Mammary epithelial cell (primary cell): ENCODE measurements at regions of chr17 and their contacts with region 1.

Region 1: DNA sequence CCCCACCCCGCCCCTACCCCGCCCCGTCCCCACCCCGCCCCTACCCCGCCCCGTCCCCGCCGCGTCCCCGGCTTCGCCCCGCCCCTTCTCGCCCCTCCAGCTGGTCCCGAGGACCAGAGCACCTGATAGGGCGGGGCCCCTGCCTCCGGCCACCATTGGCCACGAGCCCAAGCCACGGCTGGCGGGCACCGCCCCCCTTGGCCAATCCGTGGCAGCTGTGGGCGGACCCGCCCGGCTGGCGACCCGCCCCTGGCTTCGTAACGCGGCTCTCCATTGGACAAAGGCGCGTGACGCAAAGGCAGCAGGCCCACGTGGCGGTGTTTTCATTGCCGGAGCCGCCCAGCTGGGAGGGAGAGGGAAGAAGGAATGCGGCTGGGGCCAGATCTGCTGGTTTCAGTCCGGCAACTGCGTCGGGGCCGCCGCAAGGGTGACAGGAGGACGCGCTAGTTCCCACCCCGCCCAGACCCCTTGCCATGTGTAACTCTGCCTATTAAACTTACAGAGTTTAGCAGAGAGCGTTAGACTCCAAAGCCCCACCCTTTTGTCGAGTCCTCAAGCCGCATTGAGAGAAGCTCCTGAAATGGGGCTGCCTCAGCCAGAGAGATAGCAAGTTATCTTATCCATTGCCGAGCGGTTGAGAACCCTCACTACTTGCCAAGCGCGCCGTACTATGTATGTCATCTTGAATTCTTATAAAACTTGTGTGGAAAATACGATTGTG is 403 bp upstream of the WIPI1 start:
- DNase-seq: peak; percentile 99
- H3K4me3 ChIP-seq: peak overlapping the region; percentile 47 to 50 (median 48)
- H3K27ac ChIP-seq: peak overlapping the region; percentile 56
- H3K4me1 ChIP-seq: peaks cover 34% of the 10 kb centered on the region
- H3K27me3 ChIP-seq: no peaks in the 10 kb centered on the region
- CTCF ChIP-seq: no peak

Region 2: GRCh38 chr17:67959288-67959900 is 498.3 kb before region 1 on chr17:
- CTCF ChIA-PET with region 1: no interaction called
- dilution Hi-C with region 1: no loop called
- in situ Hi-C with region 1: loop called in 1 of 2 experiments (anchors 25 kb)
- intact Hi-C with region 1: loop called (anchors 2 kb)
- DNase-seq: no peak
- H3K4me3 ChIP-seq: no peak overlapping the region
- H3K27ac ChIP-seq: no peak overlapping the region
- H3K4me1 ChIP-seq: no peaks in the 10 kb centered on the region
- H3K27me3 ChIP-seq: no peaks in the 10 kb centered on the region
- CTCF ChIP-seq: no peak

Region 3: DNA sequence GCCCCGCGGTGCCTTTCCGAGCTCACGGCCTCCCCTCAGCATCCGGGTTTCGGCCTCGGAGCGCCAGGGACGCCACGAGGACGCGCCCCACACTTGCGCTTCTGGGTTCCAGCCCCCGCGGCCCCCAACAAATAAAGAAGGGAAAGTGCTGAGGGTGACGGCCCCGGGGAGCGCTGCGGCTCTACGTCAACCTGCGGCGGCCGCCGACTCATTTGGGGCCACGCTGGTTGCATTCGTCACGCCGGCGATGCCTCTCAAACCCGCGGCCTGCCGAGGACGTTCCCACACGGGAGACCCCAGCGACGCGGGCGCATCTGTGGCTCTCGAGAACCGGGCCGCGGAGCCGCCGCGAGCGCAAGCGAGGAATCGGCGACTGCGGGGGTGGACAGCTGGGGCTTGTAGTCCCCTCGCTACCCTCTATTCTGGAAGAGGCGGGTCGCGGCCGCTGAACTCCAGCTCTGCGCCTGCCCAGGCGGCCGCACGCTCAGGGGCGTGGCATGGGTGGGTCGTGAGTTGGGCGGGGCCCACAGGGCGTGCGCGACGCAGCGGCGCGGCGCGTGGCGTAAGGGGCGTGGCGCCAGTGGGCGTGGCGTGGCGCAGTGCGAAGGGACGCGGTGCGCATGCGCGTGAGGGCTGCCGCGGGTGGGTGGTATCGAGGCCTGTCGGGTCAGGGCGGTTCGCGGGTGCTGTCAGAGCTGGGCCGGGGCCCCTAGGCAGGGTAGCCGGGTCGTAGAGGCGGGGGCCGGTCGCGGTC is 210.1 kb before region 1 on chr17 and contains the start of gene AMZ2:
- CTCF ChIA-PET with region 1: no interaction called
- dilution Hi-C with region 1: loop called (anchors 5 kb)
- in situ Hi-C with region 1: loop called in 1 of 2 experiments (anchors 10 kb)
- intact Hi-C with region 1: loop called (anchors 5 kb)
- DNase-seq: peak; percentile 91
- H3K4me3 ChIP-seq: peak within 1 kb of the TSS; percentile 67 to 93 (median 71)
- H3K27ac ChIP-seq: peak within 1 kb of the TSS; percentile 83
- H3K4me1 ChIP-seq: peaks cover 8% of the 10 kb centered on the region
- H3K27me3 ChIP-seq: no peaks in the 10 kb centered on the region
- CTCF ChIP-seq: no peak
- total RNA-seq, gene AMZ2: 96.4 to 124 TPM

Region 4: GRCh38 chr17:68435876-68436842 is 21.5 kb before region 1 on chr17:
- CTCF ChIA-PET with region 1: interaction called, 6 read pairs
- dilution Hi-C with region 1: no loop called
- in situ Hi-C with region 1: no loop called
- intact Hi-C with region 1: loop called (anchors 1 kb)
- DNase-seq: peak; percentile 62
- H3K4me3 ChIP-seq: no peak overlapping the region
- H3K27ac ChIP-seq: peak overlapping the region; percentile 15
- H3K4me1 ChIP-seq: peaks cover 5% of the 10 kb centered on the region
- H3K27me3 ChIP-seq: no peaks in the 10 kb centered on the region
- CTCF ChIP-seq: peak; percentile 94 to 96